A673 (cell line): ENCODE measurements at regions of chr6 and their contacts with region 1.

Region 1: GRCh38 chr6:164106345-164106769 is 691.8 kb downstream of the QKI start:
- DNase-seq: peak; percentile 52
- H3K4me3 ChIP-seq: no peak overlapping the region
- H3K27ac ChIP-seq: no peak overlapping the region
- H3K4me1 ChIP-seq: peaks cover 15% of the 10 kb centered on the region
- H3K27me3 ChIP-seq: no peaks in the 10 kb centered on the region
- CTCF ChIP-seq: peak; percentile 71

Region 2: DNA sequence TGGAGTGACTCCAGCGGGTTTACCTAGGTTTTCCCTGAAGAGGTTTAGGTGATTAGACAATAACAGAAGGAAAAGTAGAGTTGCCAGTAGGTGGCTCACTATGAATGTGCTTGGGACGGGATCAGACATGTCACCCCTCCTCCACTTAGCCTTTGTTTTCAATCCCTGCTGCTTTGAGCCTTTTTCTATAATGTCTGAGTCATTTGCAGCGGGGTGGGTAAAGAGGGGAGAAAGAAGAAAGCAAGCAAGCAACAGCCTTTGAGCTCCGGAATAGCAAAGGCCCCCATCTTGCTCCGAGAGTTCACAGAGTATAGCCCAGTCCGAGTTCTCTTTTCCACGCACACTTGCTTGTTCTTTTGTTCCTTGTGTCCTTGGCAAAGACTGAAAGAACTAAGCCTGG is 1249.5 kb before region 1 on chr6:
- CTCF ChIA-PET with region 1: no interaction called
- POLR2A ChIA-PET with region 1: no interaction called
- intact Hi-C with region 1: loop called (anchors 5 kb)
- DNase-seq: peak; percentile 87
- H3K4me3 ChIP-seq: peak overlapping the region; percentile 35
- H3K27ac ChIP-seq: peak overlapping the region; percentile 66
- H3K4me1 ChIP-seq: peaks cover 9% of the 10 kb centered on the region
- H3K27me3 ChIP-seq: no peaks in the 10 kb centered on the region
- CTCF ChIP-seq: peak; percentile 61

Region 3: DNA sequence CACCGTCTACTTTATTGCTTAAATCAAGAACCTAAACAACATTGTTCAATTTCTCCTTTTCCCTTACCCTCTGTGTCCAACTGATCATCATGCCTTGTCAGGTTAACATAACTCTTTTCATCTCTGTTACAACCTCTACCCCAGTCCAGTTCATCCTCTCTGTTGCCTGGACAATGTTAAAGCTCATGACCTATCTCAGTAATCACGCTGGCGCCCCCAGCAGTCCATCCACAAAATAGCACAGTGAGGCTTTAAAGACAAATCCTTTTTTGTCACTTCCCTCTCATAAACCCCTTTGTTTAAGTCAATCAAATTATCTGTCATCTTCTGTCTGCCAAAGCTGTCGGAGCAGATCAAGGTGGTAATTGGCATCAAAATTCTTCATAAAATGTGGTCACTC is 551.7 kb before region 1 on chr6:
- CTCF ChIA-PET with region 1: no interaction called
- POLR2A ChIA-PET with region 1: no interaction called
- intact Hi-C with region 1: loop called (anchors 10 kb)
- DNase-seq: peak; percentile 63
- H3K4me3 ChIP-seq: no peak overlapping the region
- H3K27ac ChIP-seq: no peak overlapping the region
- H3K4me1 ChIP-seq: no peaks in the 10 kb centered on the region
- H3K27me3 ChIP-seq: no peaks in the 10 kb centered on the region
- CTCF ChIP-seq: peak; percentile 84

Region 4: DNA sequence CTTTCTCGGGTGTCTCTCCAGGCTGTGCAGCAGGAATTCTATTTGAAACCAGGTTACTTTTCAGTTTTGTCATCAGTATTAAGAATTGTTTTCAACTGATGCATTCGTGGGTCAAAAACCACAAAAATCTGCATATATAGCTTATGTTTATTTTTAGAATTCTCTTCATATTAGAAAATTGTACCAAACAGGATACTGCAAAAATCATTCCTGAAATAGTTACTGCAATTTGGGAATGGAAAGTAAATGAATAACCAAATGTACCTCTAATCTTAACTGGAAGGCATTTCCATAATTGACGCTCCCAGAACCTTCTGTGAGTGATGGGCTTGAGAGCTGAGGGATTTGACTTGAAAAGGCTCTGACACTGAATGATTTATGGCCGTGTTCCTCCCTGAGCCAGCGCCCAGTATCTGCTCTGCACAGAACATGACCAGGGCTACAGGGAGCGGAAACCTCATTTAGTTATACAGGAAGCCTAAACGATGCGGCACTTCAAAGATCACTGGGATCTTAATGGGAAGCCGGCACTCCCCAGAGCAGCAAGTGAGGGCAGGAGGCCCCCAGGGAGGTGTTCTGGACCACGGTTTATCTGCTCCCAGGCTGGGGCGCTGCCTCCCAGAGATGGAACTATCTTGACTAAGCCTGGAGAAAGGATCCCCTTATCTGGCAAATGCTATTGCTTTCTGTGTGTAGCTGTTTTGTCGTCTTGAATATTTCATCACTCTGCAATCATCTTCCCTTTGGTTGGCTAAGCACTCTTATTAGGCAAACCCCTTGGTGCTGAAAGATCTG is 245.9 kb before region 1 on chr6:
- CTCF ChIA-PET with region 1: no interaction called
- POLR2A ChIA-PET with region 1: no interaction called
- intact Hi-C with region 1: loop called (anchors 10 kb)
- DNase-seq: peak; percentile 87
- H3K4me3 ChIP-seq: no peak overlapping the region
- H3K27ac ChIP-seq: no peak overlapping the region
- H3K4me1 ChIP-seq: peaks cover 18% of the 10 kb centered on the region
- H3K27me3 ChIP-seq: peaks cover 27% of the 10 kb centered on the region
- CTCF ChIP-seq: no peak

Region 5: GRCh38 chr6:164927288-164928056 is 821.1 kb after region 1 on chr6:
- CTCF ChIA-PET with region 1: no interaction called
- POLR2A ChIA-PET with region 1: no interaction called
- intact Hi-C with region 1: loop called (anchors 5 kb)
- DNase-seq: peak; percentile 65
- H3K4me3 ChIP-seq: no peak overlapping the region
- H3K27ac ChIP-seq: no peak overlapping the region
- H3K4me1 ChIP-seq: no peaks in the 10 kb centered on the region
- H3K27me3 ChIP-seq: no peaks in the 10 kb centered on the region
- CTCF ChIP-seq: peak; percentile 94